BJ (cell line): ENCODE measurements at regions of chr7 and their contacts with region 1.

Region 1: GRCh38 chr7:134778941-134779740 is at the start of gene CALD1:
- DNase-seq: peak; percentile 99
- H3K4me3 ChIP-seq: peak within 1 kb of the TSS; percentile 55
- H3K27me3 ChIP-seq: no peaks in the 10 kb centered on the region
- CTCF ChIP-seq: no peak
- polyA plus RNA-seq, gene CALD1: 1,629 and 1,746 TPM in 2 replicates

Region 2: DNA sequence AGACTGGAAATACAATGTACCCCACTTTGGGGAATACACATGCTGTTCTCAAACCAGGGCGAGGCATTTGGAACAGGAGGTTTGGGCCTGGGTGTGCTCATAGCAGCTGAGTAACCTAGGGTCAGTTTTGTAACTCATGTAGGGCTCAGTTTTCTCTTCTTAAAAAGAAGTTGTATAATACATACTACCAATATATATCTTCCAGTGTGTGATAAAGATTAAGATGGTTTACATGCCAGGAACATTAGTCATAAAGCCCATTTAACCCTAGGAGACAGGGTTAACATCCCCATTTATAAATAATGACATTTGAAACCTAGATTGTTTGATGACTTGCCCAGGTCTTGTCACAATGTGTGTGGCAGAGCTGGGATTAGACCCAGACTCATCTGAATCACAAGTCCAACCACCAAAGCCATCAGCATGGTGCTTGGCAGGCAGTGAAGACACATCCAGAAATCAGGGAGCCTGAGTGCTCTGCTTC is 245.8 kb before region 1 on chr7:
- CTCF ChIA-PET with region 1: no interaction called
- POLR2A ChIA-PET with region 1: interaction called, 17 read pairs
- DNase-seq: no peak
- H3K4me3 ChIP-seq: no peak overlapping the region
- H3K27me3 ChIP-seq: peaks cover 1% of the 10 kb centered on the region
- CTCF ChIP-seq: no peak

Region 3: DNA sequence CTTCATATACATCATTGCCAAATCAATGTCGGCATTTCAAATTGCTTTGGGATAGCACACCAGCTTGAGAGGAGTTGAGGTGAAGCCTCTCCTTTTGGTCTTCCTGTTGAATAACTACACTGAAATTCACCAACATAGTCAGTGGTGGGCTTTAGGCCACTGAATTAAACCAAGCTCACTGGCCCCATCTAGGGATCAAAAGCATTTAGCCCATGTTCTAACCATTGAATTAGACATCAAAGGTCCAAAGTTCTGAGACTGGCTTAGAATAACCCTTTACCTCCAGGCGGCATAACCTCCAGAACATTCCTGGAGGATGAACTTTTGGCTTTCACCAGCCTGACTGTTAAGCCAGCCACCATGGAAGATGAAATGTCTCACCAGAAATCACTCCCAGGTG is 77.9 kb before region 1 on chr7:
- CTCF ChIA-PET with region 1: interaction called, 5 read pairs
- POLR2A ChIA-PET with region 1: interaction called, 13 read pairs
- DNase-seq: no peak
- H3K4me3 ChIP-seq: no peak overlapping the region
- H3K27me3 ChIP-seq: no peaks in the 10 kb centered on the region
- CTCF ChIP-seq: peak; percentile 14; the same call in 1 of the 2 replicates